Common myeloid progenitor, CD34-positive (primary cell): ENCODE measurements at regions of chr20 and their contacts with region 1.

Region 1: GRCh38 chr20:23441850-23442313 is 2.4 kb downstream of the CSTL1 start:
- DNase-seq: peak; percentile 75 to 85 (median 78)
- H3K4me3 ChIP-seq: no peak overlapping the region
- H3K27ac ChIP-seq: no peak overlapping the region
- H3K4me1 ChIP-seq: no peaks in the 10 kb centered on the region
- H3K27me3 ChIP-seq: no peaks in the 10 kb centered on the region

Region 2: DNA sequence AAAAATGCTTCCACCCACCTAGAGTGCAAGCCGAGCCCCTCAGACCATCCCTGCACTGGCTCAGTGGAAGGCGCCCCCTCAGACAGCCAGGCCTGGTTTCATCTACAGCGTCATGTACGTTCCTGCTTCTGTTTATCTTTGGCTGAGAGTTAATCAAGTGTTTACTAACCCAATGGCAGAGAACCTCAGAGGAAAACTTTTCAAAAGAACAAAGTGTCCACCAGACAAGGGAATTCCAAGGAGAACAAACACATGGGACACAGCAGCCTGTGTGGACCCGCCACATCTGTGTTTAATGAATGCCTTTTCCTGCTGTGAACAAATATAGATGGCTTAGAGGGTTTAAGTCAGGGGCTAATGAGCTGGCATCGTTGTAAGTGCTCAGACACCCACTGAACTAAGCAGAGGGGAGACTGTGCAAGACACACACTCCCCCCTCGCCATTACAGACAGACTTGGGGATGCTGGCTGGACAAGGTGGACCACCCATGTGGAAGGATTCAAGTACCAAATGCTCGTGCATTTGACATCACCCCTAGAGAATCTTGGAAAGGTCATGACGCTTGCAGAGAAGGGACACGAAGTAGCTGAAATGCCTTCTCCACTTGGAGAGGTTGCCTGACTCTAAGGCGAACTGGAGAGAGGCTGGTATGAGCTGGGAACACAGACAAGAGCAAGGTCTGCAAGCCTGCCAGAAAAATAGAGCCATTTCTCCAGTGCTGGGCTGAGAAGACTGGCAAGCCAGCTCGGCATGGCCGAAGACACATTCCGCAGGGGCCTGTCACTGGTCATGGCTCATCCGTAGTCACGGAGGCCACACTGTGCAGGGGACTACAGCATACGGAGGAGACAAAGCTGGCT is 144.8 kb before region 1 on chr20:
- CTCF ChIA-PET with region 1: no interaction called
- POLR2A ChIA-PET with region 1: no interaction called
- DNase-seq: no peak
- H3K4me3 ChIP-seq: no peak overlapping the region
- H3K27ac ChIP-seq: no peak overlapping the region
- H3K4me1 ChIP-seq: no peaks in the 10 kb centered on the region
- H3K27me3 ChIP-seq: peaks cover 0 to 5% (median 0%) of the 10 kb centered on the region in 5 experiments

Region 3: DNA sequence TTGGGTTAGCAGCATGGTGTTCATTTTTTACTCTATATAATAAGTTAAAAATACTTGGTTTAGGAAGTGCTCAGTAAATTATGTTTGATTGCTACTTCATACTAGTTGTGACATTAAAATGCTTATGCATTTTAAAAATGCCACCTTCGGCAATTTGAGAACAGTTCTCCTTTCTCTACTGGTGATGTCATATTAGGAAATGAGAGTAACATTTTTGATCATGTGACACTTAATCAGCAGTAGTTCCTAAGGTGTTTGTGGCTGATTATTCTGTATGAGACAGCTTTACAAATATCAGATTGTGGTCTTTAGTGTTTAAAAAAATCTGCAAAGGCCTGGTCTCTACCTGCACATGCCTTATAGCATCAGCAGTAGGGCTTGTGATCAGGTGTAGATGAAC is 75.5 kb before region 1 on chr20:
- CTCF ChIA-PET with region 1: no interaction called
- POLR2A ChIA-PET with region 1: no interaction called
- DNase-seq: peak; percentile 70 to 86 (median 77)
- H3K4me3 ChIP-seq: no peak overlapping the region
- H3K27ac ChIP-seq: peak overlapping the region; percentile 8 to 71
- H3K4me1 ChIP-seq: peaks cover 11 to 31% (median 27%) of the 10 kb centered on the region in 4 experiments
- H3K27me3 ChIP-seq: no peaks in the 10 kb centered on the region

Region 4: DNA sequence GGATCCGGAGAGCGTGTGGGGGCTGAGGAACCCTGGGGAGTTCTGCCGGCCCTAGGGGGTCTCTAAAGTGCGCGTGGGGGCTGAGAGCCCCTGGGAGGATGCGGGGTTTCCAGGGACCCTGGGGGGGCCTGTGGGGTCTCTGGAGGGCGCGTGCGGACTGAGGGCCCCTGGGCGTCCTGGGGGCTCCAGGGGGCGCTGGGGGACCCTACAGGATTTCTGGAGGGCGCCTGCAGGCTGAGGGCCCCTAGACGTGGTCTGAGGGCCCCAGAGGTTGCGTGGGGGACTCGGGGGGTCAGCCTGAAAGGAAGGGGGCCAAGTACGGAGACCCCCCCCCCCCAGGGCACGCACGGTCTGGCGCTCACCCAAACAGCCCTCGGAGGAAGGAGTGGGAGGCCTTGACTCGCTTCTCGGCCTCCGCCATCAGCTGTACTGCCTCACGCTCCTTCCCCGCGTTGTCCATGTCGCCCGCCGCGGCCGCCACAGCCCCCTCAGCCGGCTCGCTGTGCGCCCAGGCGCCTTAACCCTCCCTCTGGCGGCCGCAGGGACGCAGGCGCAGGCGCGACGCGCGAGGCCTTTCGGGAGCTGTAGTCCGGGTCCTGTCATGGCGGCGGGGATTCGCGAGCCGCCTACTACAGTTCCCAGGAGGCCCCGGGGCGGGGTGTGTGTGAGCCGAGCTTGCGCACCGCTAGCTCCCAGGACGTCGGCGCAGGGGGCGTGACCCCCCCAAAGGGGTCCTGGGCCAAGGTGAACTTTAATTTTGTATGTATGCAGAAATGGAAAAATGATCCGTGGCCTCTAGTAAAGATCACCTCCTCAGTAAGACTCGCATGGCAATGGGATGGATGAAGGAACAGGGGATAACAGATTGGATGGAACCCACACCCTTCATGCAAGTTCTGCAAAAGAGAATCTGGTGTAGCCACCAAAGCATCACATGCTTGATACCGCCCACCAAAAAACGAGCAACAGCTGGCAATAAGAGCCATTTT is 20.6 kb before region 1 on chr20 and contains the start of gene NAPB:
- CTCF ChIA-PET with region 1: interaction called, 25 read pairs
- POLR2A ChIA-PET with region 1: no interaction called
- DNase-seq: peak; percentile 93 to 96 (median 96)
- H3K4me3 ChIP-seq: peak within 1 kb of the TSS; percentile 80 to 96 (median 91)
- H3K27ac ChIP-seq: peak within 1 kb of the TSS; percentile 85 to 91
- H3K4me1 ChIP-seq: peaks cover 9 to 40% (median 20%) of the 10 kb centered on the region in 4 experiments
- H3K27me3 ChIP-seq: no peaks in the 10 kb centered on the region

Region 5: GRCh38 chr20:23451956-23452487 is 10.1 kb after region 1 on chr20:
- CTCF ChIA-PET with region 1: interaction called, 10 read pairs
- POLR2A ChIA-PET with region 1: no interaction called
- DNase-seq: no peak
- H3K4me3 ChIP-seq: no peak overlapping the region
- H3K27ac ChIP-seq: no peak overlapping the region
- H3K4me1 ChIP-seq: peaks cover 2 to 22% (median 16%) of the 10 kb centered on the region in 4 experiments
- H3K27me3 ChIP-seq: no peaks in the 10 kb centered on the region

Region 6: GRCh38 chr20:23606652-23607049 is 164.8 kb after region 1 on chr20:
- CTCF ChIA-PET with region 1: interaction called, 118 read pairs
- POLR2A ChIA-PET with region 1: interaction called, 3 read pairs
- DNase-seq: peak; percentile 67 to 84 (median 77)
- H3K4me3 ChIP-seq: no peak overlapping the region
- H3K27ac ChIP-seq: no peak overlapping the region
- H3K4me1 ChIP-seq: peaks cover under 1 to 22% (median 14%) of the 10 kb centered on the region in 4 experiments
- H3K27me3 ChIP-seq: no peaks in the 10 kb centered on the region